ENCODE measurements at regions of chr6 and their contacts with region 1.

Region 1: DNA sequence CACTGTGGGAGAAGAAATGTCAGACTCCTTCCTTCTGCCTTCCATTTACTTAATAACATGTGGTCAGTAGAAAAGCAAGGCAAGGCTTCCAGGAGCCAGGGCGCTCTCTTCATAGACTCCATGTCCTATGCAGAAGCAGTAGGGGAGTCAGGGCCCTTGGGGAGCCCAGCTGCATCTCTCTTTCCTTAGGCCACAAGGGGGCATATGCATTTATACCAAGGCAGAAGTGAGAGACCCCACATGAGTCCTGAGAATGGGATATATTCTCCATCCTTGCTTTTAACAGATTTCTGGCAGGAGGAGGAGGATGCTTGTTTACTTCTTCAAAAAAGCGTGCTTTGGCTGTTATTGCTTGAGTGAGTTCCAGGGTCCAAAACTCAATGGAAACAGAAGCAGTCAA is 198.5 kb downstream of the HIVEP2 start:
- DNase-seq: peak in 1 of 2 experiments; percentile 58
- H3K4me3 ChIP-seq: no peak overlapping the region
- H3K27ac ChIP-seq: no peak overlapping the region
- H3K4me1 ChIP-seq: no peaks in the 10 kb centered on the region
- H3K27me3 ChIP-seq: no peaks in the 10 kb centered on the region
- CTCF ChIP-seq: peak; percentile 48 to 78 (median 71)
- EP300 ChIP-seq: no peak
- POLR2A ChIP-seq: no peak
- RAD21 ChIP-seq: peak; percentile 69 to 76

Region 2: DNA sequence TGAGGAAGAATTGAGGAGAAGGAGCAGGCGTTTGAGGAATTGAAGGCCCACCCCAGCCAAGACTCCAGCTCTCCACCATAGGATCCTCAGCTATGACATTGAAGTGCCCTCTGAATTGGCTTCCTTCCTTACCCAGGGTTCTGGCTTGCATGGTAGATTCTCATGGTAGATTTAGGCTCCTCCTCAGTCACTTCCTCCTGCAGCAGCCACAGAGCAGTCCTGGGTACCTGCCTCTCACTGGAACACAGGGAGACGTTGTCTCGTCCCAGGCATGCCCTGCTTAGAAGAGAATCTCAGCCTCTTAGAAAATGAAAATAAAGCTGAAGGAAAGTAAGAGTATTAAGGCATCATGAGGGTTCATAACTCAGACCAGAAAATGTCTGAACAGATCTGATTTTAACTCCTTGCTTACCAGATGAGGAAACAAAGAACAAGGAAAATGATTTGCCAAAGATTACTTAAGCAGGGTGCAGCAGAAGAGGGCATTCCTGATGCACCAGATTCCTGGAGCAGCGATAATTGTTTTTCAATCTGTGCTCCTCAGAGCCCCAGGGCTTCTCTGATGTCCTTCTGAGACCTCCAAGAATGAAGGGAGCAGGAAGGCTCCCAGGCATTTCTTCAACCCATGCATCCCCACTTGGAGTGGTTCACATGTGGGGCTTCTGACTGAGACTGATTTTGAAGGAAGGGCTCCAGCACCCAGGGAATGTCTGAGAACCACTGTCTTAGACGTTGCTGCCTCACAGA is 21.3 kb before region 1 on chr6:
- CTCF ChIA-PET with region 1: interaction called, 11 read pairs
- POLR2A ChIA-PET with region 1: no interaction called
- DNase-seq: no peak
- H3K4me3 ChIP-seq: no peak overlapping the region
- H3K27ac ChIP-seq: no peak overlapping the region
- H3K4me1 ChIP-seq: no peaks in the 10 kb centered on the region
- H3K27me3 ChIP-seq: no peaks in the 10 kb centered on the region
- CTCF ChIP-seq: no peak
- EP300 ChIP-seq: no peak
- POLR2A ChIP-seq: no peak
- RAD21 ChIP-seq: no peak

Region 3: GRCh38 chr6:142765306-142765705 is 18.8 kb after region 1 on chr6:
- CTCF ChIA-PET with region 1: interaction called, 12 read pairs
- POLR2A ChIA-PET with region 1: no interaction called
- DNase-seq: no peak
- H3K4me3 ChIP-seq: no peak overlapping the region
- H3K27ac ChIP-seq: no peak overlapping the region
- H3K4me1 ChIP-seq: no peaks in the 10 kb centered on the region
- H3K27me3 ChIP-seq: no peaks in the 10 kb centered on the region
- CTCF ChIP-seq: no peak
- EP300 ChIP-seq: no peak
- POLR2A ChIP-seq: no peak
- RAD21 ChIP-seq: no peak

Region 4: GRCh38 chr6:143026696-143027449 is 280.3 kb after region 1 on chr6:
- CTCF ChIA-PET with region 1: interaction called, 14 read pairs
- POLR2A ChIA-PET with region 1: no interaction called
- DNase-seq: peak; percentile 27 to 71
- H3K4me3 ChIP-seq: no peak overlapping the region
- H3K27ac ChIP-seq: no peak overlapping the region
- H3K4me1 ChIP-seq: no peaks in the 10 kb centered on the region
- H3K27me3 ChIP-seq: no peaks in the 10 kb centered on the region
- CTCF ChIP-seq: peak; percentile 74 to 85 (median 82)
- EP300 ChIP-seq: no peak
- POLR2A ChIP-seq: no peak
- RAD21 ChIP-seq: peak; percentile 88 to 91